GM12878 (cell line): ENCODE measurements at regions of chr1 and their contacts with region 1.

Region 1: GRCh38 chr1:26500488-26501175 is 28.4 kb downstream of the HMGN2 start:
- DNase-seq: peak; percentile 39
- ATAC-seq: peak; percentile 86
- H3K4me3 ChIP-seq: peak overlapping the region; percentile 89
- H3K27ac ChIP-seq: peak overlapping the region; percentile 95
- H3K4me1 ChIP-seq: peaks cover 14% of the 10 kb centered on the region
- H3K27me3 ChIP-seq: no peaks in the 10 kb centered on the region
- CTCF ChIP-seq: no peak
- EP300 ChIP-seq: peak in 1 of 2 experiments; percentile 36; a peak in 1 of 4 replicates
- POLR2A ChIP-seq: peak; percentile 97
- RAD21 ChIP-seq: no peak

Region 2: DNA sequence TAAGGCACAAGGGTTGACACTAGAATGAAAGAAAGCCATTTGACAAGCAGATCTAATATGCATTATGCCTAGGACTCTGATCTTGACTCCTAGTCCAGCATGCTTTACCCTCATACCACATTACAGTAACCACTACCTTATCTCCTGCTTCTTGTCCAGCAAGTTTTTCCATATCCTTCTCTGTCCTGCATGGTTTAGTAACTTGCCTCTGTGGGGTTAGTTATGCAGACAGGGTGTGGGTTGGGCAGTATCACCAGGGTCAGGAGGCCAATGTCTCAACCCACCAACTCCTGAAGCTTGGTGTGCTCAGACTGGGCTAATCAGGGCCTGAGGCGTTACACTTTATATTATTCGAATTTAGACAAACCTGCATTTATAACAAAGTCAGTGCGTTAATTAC is 49.7 kb before region 1 on chr1:
- CTCF ChIA-PET with region 1: no interaction called
- POLR2A ChIA-PET with region 1: no interaction called
- RAD21 ChIA-PET with region 1: no interaction called
- SMC1A ChIA-PET with region 1: no interaction called
- in situ Hi-C with region 1: no loop called
- intact Hi-C with region 1: no loop called
- DNase-seq: no peak
- ATAC-seq: no peak
- H3K4me3 ChIP-seq: no peak overlapping the region
- H3K27ac ChIP-seq: no peak overlapping the region
- H3K4me1 ChIP-seq: no peaks in the 10 kb centered on the region
- H3K27me3 ChIP-seq: no peaks in the 10 kb centered on the region
- CTCF ChIP-seq: no peak
- EP300 ChIP-seq: no peak
- POLR2A ChIP-seq: no peak
- RAD21 ChIP-seq: no peak

Region 3: DNA sequence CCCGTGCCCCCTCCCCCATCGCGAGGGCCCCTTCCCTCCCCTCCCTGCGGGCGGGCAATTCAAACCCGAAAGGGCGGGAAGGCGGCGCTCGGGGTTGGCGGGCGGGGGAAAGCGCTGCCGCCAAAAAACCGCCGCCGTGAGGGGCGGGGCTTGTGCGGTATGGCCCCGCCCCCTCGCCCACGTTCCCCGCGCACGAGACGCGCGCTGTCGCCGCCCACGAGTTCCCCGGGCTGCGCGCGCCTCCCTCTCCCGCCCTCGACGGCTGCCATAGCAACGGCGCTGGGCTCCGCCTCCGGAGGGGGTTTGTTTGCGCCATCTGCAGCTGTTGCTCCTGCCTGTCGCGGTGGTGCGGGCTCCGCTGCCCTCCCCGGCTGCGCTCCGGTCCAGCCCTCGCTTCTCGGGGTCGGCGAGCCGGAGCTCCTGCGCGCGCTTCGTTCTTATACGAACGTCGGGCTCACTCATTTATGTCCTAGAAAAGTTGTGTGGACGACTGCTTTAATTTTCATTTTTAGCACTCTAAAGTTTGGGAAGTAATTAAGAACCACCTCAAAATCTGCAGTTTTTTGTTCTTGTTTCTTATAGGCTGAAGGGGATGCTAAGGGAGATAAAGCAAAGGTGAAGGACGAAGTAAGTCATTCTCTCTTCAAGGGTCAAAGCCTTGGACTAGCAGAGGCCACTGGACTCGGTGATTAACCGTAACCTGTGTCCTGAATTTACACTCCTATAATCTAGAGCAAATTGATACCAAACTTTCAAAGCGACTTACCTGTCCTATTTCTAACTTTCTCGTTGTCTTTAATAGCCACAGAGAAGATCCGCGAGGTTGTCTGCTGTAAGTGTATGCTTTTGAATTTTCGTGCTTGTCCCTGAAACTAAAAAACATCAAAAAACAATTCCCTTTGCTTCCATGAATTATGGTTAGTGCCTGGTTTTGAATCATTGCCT is 27.5 kb before region 1 on chr1:
- CTCF ChIA-PET with region 1: interaction called, 9 read pairs
- POLR2A ChIA-PET with region 1: interaction called, 4 read pairs
- RAD21 ChIA-PET with region 1: interaction called, 12 read pairs
- SMC1A ChIA-PET with region 1: interaction called, 3 read pairs
- in situ Hi-C with region 1: no loop called
- intact Hi-C with region 1: no loop called
- DNase-seq: peak; percentile 67
- ATAC-seq: peak; percentile 81
- H3K4me3 ChIP-seq: peak overlapping the region; percentile 84
- H3K27ac ChIP-seq: peak overlapping the region; percentile 98
- H3K4me1 ChIP-seq: peaks cover 19% of the 10 kb centered on the region
- H3K27me3 ChIP-seq: no peaks in the 10 kb centered on the region
- CTCF ChIP-seq: no peak
- EP300 ChIP-seq: no peak
- POLR2A ChIP-seq: peak; percentile 53
- RAD21 ChIP-seq: no peak

Region 4: GRCh38 chr1:26524181-26524580 is 23.5 kb after region 1 on chr1:
- CTCF ChIA-PET with region 1: interaction called, 59 read pairs
- POLR2A ChIA-PET with region 1: interaction called, 22 read pairs
- RAD21 ChIA-PET with region 1: interaction called, 43 read pairs
- SMC1A ChIA-PET with region 1: interaction called, 8 read pairs
- in situ Hi-C with region 1: no loop called
- intact Hi-C with region 1: no loop called
- DNase-seq: no peak
- ATAC-seq: no peak
- H3K4me3 ChIP-seq: no peak overlapping the region
- H3K27ac ChIP-seq: no peak overlapping the region
- H3K4me1 ChIP-seq: peaks cover 10% of the 10 kb centered on the region; the same call in 1 of the 2 replicates
- H3K27me3 ChIP-seq: no peaks in the 10 kb centered on the region
- CTCF ChIP-seq: no peak
- EP300 ChIP-seq: no peak
- POLR2A ChIP-seq: no peak
- RAD21 ChIP-seq: no peak

Region 5: GRCh38 chr1:26529655-26530409 is 29.2 kb after region 1 on chr1 and contains the start of gene RPS6KA1:
- CTCF ChIA-PET with region 1: interaction called, 59 read pairs
- POLR2A ChIA-PET with region 1: interaction called, 22 read pairs
- RAD21 ChIA-PET with region 1: interaction called, 43 read pairs
- SMC1A ChIA-PET with region 1: interaction called, 8 read pairs
- in situ Hi-C with region 1: no loop called
- intact Hi-C with region 1: no loop called
- DNase-seq: no peak
- ATAC-seq: peak; percentile 79
- H3K4me3 ChIP-seq: peak within 1 kb of the TSS; percentile 83
- H3K27ac ChIP-seq: peak within 1 kb of the TSS; percentile 57
- H3K4me1 ChIP-seq: peaks cover 17% of the 10 kb centered on the region; the same call in 1 of the 2 replicates
- H3K27me3 ChIP-seq: no peaks in the 10 kb centered on the region
- CTCF ChIP-seq: no peak
- EP300 ChIP-seq: no peak
- POLR2A ChIP-seq: 0 out of 2 replicates have a peak, but pooled peaks have one; percentile 45
- RAD21 ChIP-seq: no peak
- polyA plus RNA-seq, gene RPS6KA1: 5.0 to 9.9 TPM

Region 6: DNA sequence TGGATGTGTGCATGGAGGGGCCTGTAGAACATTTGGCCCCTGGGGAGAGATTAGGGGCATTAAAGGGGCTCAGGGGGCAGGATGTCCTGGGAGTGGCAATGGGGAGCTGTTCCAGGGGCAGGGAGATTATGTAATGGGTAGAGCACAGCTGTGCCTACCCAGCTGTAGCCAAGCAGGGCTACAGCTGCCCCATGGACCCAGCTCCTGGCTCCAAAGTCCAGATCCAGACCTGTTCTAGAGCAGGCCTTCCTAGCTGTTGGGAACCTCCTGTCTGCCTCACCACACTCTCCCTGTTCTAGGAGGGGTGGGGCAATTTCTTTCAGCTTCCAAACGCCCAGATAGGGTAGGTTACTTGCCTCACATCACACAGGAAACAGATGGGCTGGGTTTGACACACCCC is 34.6 kb after region 1 on chr1:
- CTCF ChIA-PET with region 1: interaction called, 59 read pairs
- POLR2A ChIA-PET with region 1: interaction called, 22 read pairs
- RAD21 ChIA-PET with region 1: interaction called, 43 read pairs
- SMC1A ChIA-PET with region 1: interaction called, 14 read pairs
- in situ Hi-C with region 1: no loop called
- intact Hi-C with region 1: no loop called
- DNase-seq: no peak
- ATAC-seq: no peak
- H3K4me3 ChIP-seq: no peak overlapping the region
- H3K27ac ChIP-seq: no peak overlapping the region
- H3K4me1 ChIP-seq: peaks cover 39% of the 10 kb centered on the region
- H3K27me3 ChIP-seq: no peaks in the 10 kb centered on the region
- CTCF ChIP-seq: no peak
- EP300 ChIP-seq: no peak
- POLR2A ChIP-seq: no peak
- RAD21 ChIP-seq: no peak

Region 7: GRCh38 chr1:26582836-26583460 is 82.3 kb after region 1 on chr1:
- CTCF ChIA-PET with region 1: interaction called, 18 read pairs
- POLR2A ChIA-PET with region 1: interaction called, 6 read pairs
- RAD21 ChIA-PET with region 1: interaction called, 20 read pairs
- SMC1A ChIA-PET with region 1: interaction called, 8 read pairs
- in situ Hi-C with region 1: no loop called
- intact Hi-C with region 1: loop called (anchors 5 kb)
- DNase-seq: peak; percentile 56
- ATAC-seq: peak; percentile 67
- H3K4me3 ChIP-seq: no peak overlapping the region
- H3K27ac ChIP-seq: peak overlapping the region; percentile 87
- H3K4me1 ChIP-seq: peaks cover 56% of the 10 kb centered on the region
- H3K27me3 ChIP-seq: no peaks in the 10 kb centered on the region
- CTCF ChIP-seq: no peak
- EP300 ChIP-seq: peak in 1 of 2 experiments; percentile 70; a peak in 1 of 4 replicates
- POLR2A ChIP-seq: no peak
- RAD21 ChIP-seq: no peak